ENCODE measurements at regions of chr6 and their contacts with region 1.

Region 1: DNA sequence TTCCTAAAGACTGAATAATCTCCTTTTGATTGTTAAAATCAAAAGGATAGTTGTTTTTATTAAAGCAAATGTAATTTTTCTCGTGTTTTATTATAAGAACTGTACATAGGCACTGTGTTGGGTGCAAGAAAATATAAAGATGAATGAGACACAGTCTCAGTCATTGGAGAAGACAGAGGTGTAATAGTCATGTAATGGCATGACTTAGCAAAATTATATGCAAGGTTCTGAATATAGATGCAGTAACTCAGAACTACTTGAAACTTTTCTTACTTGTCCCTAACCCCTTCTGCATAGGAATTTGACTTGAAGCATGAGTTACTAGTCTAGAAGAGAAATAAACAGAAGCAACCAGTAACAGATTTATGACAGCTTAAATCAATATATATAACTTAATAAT is 14.9 kb downstream of the WTAP start:
- DNase-seq: no peak
- H3K4me3 Mint-ChIP-seq: no peak overlapping the region
- H3K27ac Mint-ChIP-seq: no peak overlapping the region
- H3K4me1 Mint-ChIP-seq: peaks cover 23% of the 10 kb centered on the region
- H3K27me3 Mint-ChIP-seq: no peaks in the 10 kb centered on the region

Region 2: DNA sequence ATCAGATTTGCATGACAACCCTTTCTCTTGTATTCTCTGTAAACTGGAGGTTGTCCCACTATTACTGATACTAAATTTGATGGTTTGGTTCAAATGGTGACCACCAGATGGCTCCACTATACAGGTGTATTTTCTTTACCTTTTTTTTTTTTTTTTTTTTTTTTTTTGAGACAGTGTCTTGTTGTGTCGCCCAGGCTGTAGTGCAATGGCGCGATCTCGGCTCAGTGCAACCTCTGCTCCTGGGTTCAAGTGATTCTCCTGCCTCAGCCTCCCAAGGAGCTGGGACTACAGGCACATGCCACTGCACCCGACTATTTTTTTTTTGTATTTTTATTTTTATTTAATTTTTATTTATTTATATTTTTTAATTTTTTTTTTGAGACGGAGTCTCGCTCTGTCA is 21.5 kb before region 1 on chr6:
- intact Hi-C with region 1: no loop called
- DNase-seq: peak; percentile 16
- H3K4me3 Mint-ChIP-seq: no peak overlapping the region
- H3K27ac Mint-ChIP-seq: no peak overlapping the region
- H3K4me1 Mint-ChIP-seq: peaks cover 14% of the 10 kb centered on the region
- H3K27me3 Mint-ChIP-seq: no peaks in the 10 kb centered on the region

Region 3: DNA sequence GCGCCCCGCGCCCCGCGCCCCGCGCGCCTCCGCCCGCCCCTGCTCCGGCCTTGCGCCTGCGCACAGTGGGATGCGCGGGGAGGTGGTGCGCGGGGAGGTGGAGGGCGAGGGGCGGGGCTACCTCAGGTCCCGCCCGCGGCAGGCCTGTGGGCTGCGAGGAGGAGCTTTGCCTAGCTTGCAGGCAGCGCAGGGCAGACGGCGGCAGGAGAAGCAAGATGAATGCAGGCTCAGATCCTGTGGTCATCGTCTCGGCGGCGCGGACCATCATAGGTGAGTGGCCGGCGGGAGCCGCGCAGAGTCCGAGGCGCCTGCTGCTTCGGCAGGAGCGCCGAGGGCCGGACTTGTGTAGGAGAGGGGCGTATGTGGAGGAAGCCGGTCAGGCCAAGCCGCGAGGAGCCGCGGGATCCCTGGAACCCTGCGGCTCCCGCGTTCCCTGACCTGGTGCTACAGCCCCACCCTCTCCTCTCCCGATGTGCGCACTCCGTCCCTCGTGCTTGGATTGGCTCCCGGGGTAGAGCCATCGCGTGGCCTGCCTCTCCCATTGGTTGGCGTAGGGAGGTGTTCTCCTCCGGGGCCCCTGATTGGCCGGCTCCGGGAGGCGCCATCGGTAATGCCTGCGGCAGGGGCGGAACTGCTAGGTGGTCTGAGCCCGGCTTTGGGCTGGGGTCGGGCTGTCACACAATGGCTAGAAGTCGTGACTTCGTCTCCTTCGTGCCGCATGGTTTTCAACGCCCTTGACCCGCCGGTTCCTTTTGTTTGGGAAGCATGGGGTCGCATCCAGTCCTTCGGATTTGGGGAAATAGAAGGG is 19.9 kb after region 1 on chr6 and contains the start of gene ACAT2:
- intact Hi-C with region 1: loop called (anchors 2 kb)
- DNase-seq: peak; percentile 94
- H3K4me3 Mint-ChIP-seq: peak within 1 kb of the TSS; percentile 97
- H3K27ac Mint-ChIP-seq: peak within 1 kb of the TSS; percentile 93
- H3K4me1 Mint-ChIP-seq: peaks cover 45% of the 10 kb centered on the region
- H3K27me3 Mint-ChIP-seq: no peaks in the 10 kb centered on the region
- total RNA-seq, gene ACAT2: 83.1 and 84.2 TPM in 2 replicates

Region 4: DNA sequence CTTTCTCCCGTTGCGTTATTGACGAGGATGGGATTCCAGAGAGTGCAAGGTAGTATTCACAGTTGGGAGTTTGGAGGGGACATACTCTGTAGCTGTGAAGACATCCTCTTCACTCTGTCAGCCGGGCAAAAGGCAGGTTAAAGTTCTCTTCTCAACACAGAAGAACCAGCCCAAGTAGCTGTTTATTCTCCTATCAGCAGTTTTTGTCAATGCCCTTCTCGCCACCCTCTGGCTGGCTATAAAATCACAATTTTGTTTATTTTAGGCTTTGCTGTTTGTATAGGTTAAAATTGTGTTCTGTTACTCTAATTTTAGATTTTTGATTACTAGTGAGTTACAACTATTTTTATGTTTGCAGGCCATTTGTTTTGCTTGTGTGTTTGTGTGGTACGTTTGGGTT is 110.7 kb after region 1 on chr6:
- intact Hi-C with region 1: no loop called
- DNase-seq: no peak
- H3K4me3 Mint-ChIP-seq: no peak overlapping the region
- H3K27ac Mint-ChIP-seq: no peak overlapping the region
- H3K4me1 Mint-ChIP-seq: no peaks in the 10 kb centered on the region
- H3K27me3 Mint-ChIP-seq: peaks cover 24% of the 10 kb centered on the region

Region 5: DNA sequence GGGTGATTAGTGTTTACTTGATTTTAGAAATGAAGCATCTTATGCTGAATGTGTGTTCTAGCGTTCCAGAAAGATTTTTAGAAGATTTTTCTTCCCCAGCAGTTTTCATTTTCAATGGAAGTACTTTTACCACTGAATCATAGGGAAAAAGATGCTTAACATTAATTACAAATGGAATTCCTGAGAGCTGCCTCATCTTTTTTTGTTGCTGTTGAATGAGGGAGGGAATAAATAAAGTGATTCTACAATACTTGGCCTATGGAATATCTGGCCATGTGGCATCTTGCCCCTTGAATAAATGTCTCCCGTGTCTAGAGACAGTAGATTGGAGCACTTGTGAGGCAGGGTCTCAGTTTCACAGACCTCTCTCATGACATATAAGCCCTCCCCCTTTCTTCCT is 335.4 kb after region 1 on chr6:
- intact Hi-C with region 1: loop called (anchors 5 kb)
- DNase-seq: no peak
- H3K4me3 Mint-ChIP-seq: no peak overlapping the region
- H3K27ac Mint-ChIP-seq: no peak overlapping the region
- H3K4me1 Mint-ChIP-seq: peaks cover 8% of the 10 kb centered on the region
- H3K27me3 Mint-ChIP-seq: no peaks in the 10 kb centered on the region

Measured in activated T-helper 1 cell treated with anti-CD3 and anti-CD28 coated beads, Interleukin-12 subunit alpha, Interleukin-12 subunit beta, Interleukin-2, Interleukin-4 antibody, amounts not matched to agents 30 ng/mL and 10 ng/mL and 1 ng/mL, durations not matched to agents 14 hours and 24 hours and 36 hours (primary cell).